Cardiac septum (tissue), 1 donor: ENCODE measurements at regions of chr3 and their contacts with region 1.

Region 1: GRCh38 chr3:149473357-149474249 is 894 bp upstream of the TM4SF4 start:
- DNase-seq: no peak

Region 2: DNA sequence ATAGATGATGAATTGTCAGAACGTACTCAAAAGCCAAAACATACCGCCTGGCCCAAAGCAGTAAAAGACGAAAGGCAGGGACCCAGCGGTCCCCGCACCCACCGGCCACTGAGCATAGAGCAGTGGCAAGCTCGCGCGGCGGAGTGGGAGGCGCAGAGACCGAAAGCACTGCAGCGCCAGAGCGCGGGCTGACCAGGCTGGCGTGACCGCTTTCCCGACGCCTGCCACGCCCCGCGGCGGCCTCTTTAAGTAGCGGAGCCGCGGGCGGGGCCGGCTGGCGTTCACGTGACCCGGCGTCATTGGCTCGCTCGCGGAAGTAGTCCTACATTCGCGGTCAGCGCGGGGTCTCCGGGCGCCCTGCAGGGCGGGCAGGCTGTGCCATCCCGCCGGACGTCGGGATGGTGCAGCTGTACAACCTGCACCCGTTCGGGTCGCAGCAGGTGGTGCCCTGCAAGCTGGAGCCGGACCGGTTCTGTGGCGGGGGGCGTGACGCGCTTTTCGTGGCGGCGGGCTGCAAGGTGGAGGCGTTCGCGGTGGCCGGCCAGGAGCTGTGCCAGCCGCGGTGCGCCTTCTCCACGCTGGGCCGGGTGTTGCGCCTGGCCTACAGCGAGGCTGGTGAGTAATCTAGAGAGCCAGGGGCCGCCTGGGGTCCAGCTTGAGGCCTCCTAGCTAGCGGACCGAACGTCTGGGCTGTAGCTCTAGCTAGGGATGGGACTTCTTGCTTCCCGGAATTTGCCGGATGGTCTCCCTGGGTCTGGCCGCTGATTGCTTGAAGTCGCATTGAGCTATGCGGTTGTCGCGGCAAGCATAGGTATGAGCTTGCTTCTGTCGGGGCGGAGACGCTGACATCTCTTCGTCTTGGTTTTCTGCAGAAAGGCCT is 344.0 kb before region 1 on chr3 and contains the start of gene HPS3:
- intact Hi-C with region 1: loop called (anchors 10 kb)
- DNase-seq: peak; percentile 97
- total RNA-seq, gene HPS3: 6.2 TPM

Region 3: GRCh38 chr3:149299938-149300791 is 173.4 kb before region 1 on chr3:
- intact Hi-C with region 1: no loop called
- DNase-seq: no peak